Dorsolateral prefrontal cortex (tissue), 120 donors: ENCODE measurements at regions of chr12 and their contacts with region 1.

Region 1: GRCh38 chr12:58920102-58920960 is at the start of gene LRIG3:
- DNase-seq: peak; percentile 31 to 88 (median 78)
- H3K4me3 ChIP-seq: peak within 1 kb of the TSS; percentile 64 to 93 (median 82)
- H3K27ac ChIP-seq: peak within 1 kb of the TSS; percentile 6 to 94 (median 85)
- H3K27me3 ChIP-seq: no peaks in the 10 kb centered on the region
- CTCF ChIP-seq: peak in 32 of 56 donors; percentile 5 to 55 (median 32)
- total RNA-seq, gene LRIG3: 3.5 to 26.0 (median 9.9) TPM

Region 2: DNA sequence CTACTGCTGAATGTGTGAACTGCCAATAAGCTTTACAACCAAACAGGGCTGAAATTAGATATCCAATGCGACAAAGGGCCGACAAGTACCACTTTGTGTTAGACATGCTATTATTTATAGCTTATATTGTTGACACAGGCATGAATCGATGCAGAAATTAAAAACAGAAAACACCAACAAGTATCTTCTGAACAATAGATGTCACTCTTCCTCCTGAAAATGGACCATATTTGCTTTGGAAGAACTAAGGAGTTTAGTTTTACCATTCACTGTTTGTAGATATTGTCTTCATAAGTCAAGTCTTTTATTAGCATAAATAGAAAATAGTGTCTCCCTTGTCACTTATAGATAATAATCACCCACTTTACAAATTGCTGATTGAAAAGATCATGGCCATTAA is 86.5 kb before region 1 on chr12:
- intact Hi-C with region 1: loop called in 1 of 2 experiments (anchors 5 kb)
- DNase-seq: no peak
- H3K4me3 ChIP-seq: no peak overlapping the region
- H3K27ac ChIP-seq: no peak overlapping the region
- H3K27me3 ChIP-seq: no peaks in the 10 kb centered on the region
- CTCF ChIP-seq: peak in 51 of 56 donors; percentile 7 to 76 (median 46)

Region 3: GRCh38 chr12:58888131-58888783 is 32.1 kb before region 1 on chr12:
- intact Hi-C with region 1: loop called in 1 of 2 experiments (anchors 2 kb)
- DNase-seq: peak in 7 of 10 donors; percentile 43 to 78 (median 54)
- H3K4me3 ChIP-seq: peak overlapping the region in 3 of 59 donors; percentile 1 to 22 (median 8)
- H3K27ac ChIP-seq: peak overlapping the region in 56 of 59 donors; percentile 3 to 95 (median 82)
- H3K27me3 ChIP-seq: no peaks in the 10 kb centered on the region
- CTCF ChIP-seq: peak in 1 of 56 donors; percentile 14